ENCODE measurements at regions of chr4 and their contacts with region 1.

Region 1: DNA sequence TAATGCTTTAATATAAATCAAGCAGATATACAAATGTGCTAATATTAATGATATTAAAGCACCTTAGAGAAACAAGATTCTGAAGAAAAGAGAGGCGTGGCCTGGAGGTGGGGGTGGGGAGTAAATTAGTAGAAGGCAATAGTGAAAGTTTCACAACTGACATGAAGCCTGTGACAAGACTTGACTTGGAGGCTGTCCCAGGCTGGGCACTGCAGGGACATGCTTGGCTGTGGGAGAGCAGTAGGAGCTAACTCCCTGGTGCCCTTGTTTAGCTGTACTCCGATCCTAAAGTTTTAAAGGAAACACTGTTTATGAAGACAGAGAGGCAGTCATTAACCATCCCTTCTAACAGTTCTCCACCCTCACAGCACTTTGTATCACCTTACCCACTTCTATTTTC is 239.0 kb upstream of the MAB21L2 start:
- DNase-seq: peak; percentile 28
- ATAC-seq: peak; percentile 79 to 98

Region 2: DNA sequence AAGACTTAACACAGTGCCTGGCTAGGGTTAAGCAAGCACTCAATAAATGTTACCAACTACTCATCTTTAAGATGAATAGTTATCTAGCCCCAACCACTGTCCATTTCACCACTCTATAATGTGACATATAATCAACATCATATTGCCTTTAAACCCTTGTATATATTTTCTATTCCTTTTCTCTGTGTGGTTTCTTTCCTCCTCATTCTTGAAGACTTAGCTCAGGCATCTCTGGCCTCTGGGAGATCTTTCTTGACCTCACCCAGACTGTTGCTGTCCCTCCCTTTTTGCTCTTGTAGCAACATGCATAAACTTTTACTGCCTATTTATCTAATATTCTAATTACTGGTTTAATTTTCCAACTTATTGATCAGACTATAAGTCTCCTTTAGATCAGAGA is 10.9 kb before region 1 on chr4:
- intact Hi-C with region 1: loop called in 1 of 2 experiments (anchors 1 kb)
- DNase-seq: no peak
- ATAC-seq: no peak

Region 3: GRCh38 chr4:150525332-150525868 is 182.5 kb after region 1 on chr4:
- intact Hi-C with region 1: no loop called
- DNase-seq: no peak
- ATAC-seq: no peak

Measured in left cardiac atrium (tissue), 4 donors.